Activated CD4-positive, alpha-beta memory T cell treated with anti-CD3 and anti-CD28 coated beads for 36 hours (primary cell): ENCODE measurements at regions of chr14 and their contacts with region 1.

Region 1: GRCh38 chr14:69766984-69767368 is at the start of gene SRSF5:
- DNase-seq: peak; percentile 96
- H3K4me3 Mint-ChIP-seq: peak within 1 kb of the TSS; percentile 99
- H3K27ac Mint-ChIP-seq: peak within 1 kb of the TSS; percentile 99
- H3K4me1 Mint-ChIP-seq: peaks cover 73% of the 10 kb centered on the region
- H3K27me3 Mint-ChIP-seq: no peaks in the 10 kb centered on the region
- total RNA-seq, gene SRSF5: 289 to 303 TPM

Region 2: GRCh38 chr14:69715725-69716477 is 51.1 kb before region 1 on chr14:
- CTCF ChIA-PET with region 1: no interaction called
- POLR2A ChIA-PET with region 1: no interaction called
- intact Hi-C with region 1: loop called (anchors 5 kb)
- DNase-seq: no peak
- H3K4me3 Mint-ChIP-seq: no peak overlapping the region
- H3K27ac Mint-ChIP-seq: peak overlapping the region; percentile 87
- H3K4me1 Mint-ChIP-seq: peaks cover 47% of the 10 kb centered on the region
- H3K27me3 Mint-ChIP-seq: no peaks in the 10 kb centered on the region

Region 3: DNA sequence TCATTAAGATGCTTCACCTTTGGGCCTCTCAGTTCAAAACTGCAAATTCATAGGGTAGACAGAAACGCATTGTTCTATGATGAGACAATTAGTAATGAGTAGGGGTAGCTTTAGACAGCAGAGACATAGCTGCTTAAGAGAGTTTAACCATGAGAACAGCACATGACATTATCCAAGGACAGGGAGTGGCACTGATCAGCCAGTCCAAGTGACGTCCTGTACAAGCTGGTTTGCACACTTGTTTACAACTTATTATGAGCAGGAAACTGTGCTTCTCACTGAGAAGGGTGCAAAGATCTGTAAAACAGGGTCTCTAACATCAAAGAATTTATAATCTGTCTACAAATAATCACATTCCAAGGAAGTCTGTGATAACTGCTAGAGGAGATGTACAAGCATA is 11.2 kb before region 1 on chr14:
- CTCF ChIA-PET with region 1: no interaction called
- POLR2A ChIA-PET with region 1: no interaction called
- intact Hi-C with region 1: loop called (anchors 1 kb)
- DNase-seq: no peak
- H3K4me3 Mint-ChIP-seq: no peak overlapping the region
- H3K27ac Mint-ChIP-seq: no peak overlapping the region
- H3K4me1 Mint-ChIP-seq: peaks cover 10% of the 10 kb centered on the region
- H3K27me3 Mint-ChIP-seq: no peaks in the 10 kb centered on the region

Region 4: DNA sequence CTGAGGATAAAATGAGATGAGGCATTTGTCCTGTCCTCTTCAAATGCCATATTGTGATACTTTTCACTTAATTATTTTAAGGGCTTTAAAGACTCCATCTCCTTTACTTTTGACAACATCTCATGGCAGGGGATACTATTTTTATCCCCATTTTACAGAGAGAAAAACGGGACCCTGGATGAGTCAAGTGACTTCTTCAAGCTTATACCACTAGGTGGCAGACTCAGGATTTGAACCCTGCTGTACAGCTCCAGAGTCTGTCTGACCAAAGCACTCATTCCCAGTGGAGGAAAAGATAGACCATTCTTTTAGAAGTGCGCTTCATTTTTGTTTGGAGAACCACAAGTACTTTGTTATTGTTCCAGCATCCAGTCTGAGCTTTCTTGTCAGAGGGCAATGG is 110.5 kb after region 1 on chr14:
- CTCF ChIA-PET with region 1: no interaction called
- POLR2A ChIA-PET with region 1: no interaction called
- intact Hi-C with region 1: no loop called
- DNase-seq: no peak
- H3K4me3 Mint-ChIP-seq: no peak overlapping the region
- H3K27ac Mint-ChIP-seq: no peak overlapping the region
- H3K4me1 Mint-ChIP-seq: no peaks in the 10 kb centered on the region
- H3K27me3 Mint-ChIP-seq: peaks cover 38% of the 10 kb centered on the region

Region 5: DNA sequence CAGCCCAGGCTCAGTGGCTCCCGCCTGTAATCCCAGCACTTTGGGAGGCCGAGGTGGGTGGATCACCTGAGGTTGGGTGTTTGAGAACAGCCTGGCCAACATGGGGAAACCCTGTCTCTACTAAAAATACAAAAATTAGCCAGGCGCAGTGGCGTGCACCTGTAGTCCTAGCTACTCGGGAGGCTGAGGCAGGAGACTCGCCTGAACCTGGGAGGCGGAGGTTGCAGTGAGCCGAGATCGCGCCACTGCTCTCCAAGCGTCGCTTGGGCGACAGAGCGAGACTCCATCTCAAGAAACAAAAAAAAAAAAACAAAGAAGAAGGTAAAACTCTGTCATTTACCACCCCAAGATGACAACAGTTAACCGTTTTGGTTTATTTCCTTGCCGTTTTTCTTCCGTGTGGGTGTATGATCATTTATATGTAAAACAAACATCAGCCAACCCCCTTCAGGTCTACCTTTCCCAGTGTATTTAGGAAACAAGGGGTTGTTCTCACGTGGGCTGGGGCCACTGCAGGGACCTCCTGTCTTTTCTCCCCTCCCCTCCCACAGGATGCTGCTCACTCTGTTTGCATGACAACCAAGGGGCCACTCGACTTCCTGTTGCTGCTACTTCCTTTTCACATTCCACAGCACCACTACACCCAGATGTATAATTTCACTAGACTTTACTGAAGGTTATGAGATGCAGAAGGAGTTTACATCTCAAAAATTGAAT is 888.3 kb after region 1 on chr14:
- CTCF ChIA-PET with region 1: no interaction called
- POLR2A ChIA-PET with region 1: no interaction called
- intact Hi-C with region 1: loop called (anchors 5 kb)
- DNase-seq: peak; percentile 87
- H3K4me3 Mint-ChIP-seq: peak overlapping the region; percentile 84
- H3K27ac Mint-ChIP-seq: peak overlapping the region; percentile 99
- H3K4me1 Mint-ChIP-seq: peaks cover 86% of the 10 kb centered on the region
- H3K27me3 Mint-ChIP-seq: no peaks in the 10 kb centered on the region